Psoas muscle (tissue), 8 donors: ENCODE measurements at regions of chr3 and their contacts with region 1.

Region 1: DNA sequence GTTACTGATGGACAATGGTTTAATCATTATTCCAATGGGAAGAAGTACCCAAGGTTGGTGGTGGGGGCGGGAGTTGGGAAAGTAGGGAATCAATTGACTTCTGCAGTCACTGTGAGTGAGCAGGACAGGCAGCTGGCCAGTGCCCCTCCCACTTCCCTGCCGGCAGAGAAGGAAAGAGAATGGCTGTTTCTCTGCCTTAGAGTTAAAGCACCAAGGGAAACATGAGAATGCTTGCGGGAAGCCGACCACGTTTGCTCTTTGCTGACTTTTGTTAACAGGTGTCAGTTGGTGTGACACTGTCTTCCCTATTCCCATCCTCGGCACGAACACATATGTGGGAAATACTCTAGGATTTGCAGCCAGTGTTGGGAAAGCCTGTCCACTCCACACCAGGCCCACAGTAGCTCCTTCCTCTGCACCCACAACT is 33.5 kb upstream of the MFSD1 start:
- DNase-seq: peak; percentile 76 to 84
- ATAC-seq: peak; percentile 82 to 85 (median 85)
- H3K4me3 ChIP-seq: peak overlapping the region; percentile 13
- H3K27ac ChIP-seq: peak overlapping the region; percentile 75
- H3K4me1 ChIP-seq: peaks cover 23% of the 10 kb centered on the region
- H3K27me3 ChIP-seq: no peaks in the 10 kb centered on the region
- CTCF ChIP-seq: no peak

Region 2: GRCh38 chr3:157515398-157515797 is 1253.0 kb before region 1 on chr3:
- intact Hi-C with region 1: no loop called
- DNase-seq: no peak
- ATAC-seq: no peak
- H3K4me3 ChIP-seq: no peak overlapping the region
- H3K27ac ChIP-seq: no peak overlapping the region
- H3K4me1 ChIP-seq: no peaks in the 10 kb centered on the region
- H3K27me3 ChIP-seq: no peaks in the 10 kb centered on the region
- CTCF ChIP-seq: no peak

Region 3: DNA sequence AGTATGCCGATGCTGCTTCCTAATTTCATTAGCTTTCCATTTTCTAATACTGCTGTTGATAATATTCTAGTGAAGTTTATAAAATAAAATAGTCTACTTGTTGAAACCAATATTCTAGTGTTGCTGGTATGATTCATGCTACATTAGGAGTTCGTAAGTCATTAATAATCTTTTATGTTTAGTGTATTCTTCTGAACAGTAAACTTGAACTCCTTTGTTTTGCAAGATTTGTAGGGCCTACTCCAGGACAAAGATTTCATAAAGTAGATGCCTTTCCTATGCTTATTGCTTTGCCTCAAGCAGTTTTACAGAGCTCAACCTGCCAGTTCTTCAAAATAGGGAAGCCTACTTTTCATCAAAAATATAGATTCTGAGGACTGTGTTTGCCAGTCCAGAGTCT is 546.9 kb before region 1 on chr3:
- intact Hi-C with region 1: no loop called
- DNase-seq: no peak
- ATAC-seq: no peak
- H3K4me3 ChIP-seq: no peak overlapping the region
- H3K27ac ChIP-seq: no peak overlapping the region
- H3K4me1 ChIP-seq: no peaks in the 10 kb centered on the region
- H3K27me3 ChIP-seq: no peaks in the 10 kb centered on the region
- CTCF ChIP-seq: no peak

Region 4: DNA sequence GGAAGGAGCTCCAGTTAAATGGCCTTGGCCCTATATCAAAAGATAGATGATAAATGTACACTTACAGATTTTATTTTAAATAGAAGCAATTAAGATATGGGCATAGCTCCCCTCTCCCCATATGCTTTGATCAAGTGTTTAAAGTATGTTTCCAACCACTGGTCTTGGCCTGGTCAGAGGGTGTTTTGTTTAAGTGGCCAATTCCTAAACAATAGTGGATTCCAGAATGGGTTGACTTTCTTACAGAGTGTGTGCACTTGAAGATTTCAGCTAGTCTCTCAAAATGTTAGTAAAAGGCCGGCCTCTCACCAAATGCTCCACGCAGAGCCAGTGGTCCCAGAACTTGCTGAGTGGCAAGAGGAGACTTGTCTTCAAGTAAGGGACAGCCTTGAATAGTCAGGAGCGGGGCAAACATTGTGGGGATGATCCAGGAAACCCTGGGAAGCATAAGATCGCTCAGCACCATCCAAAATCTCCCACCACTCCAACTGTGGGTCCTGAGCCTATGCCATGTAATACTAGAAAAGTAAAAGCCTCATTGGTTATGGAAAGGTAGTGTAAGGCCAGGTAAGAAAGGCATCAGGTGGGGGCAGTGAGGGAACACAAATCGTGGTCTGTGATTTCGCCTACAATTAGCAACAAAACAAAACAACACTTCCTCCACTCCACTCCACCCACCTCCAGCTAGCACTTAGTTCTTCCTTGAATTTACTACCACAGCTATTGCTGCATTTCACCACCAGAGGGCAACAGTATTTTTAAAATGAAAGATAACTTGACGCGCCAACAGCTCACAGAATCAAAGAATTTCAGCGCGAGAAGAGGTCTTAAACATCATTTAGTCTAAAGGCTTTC is 40.9 kb before region 1 on chr3:
- intact Hi-C with region 1: loop called in 1 of 2 experiments (anchors 5 kb)
- DNase-seq: no peak
- ATAC-seq: peak; percentile 40 to 68 (median 54)
- H3K4me3 ChIP-seq: no peak overlapping the region
- H3K27ac ChIP-seq: peak overlapping the region; percentile 40
- H3K4me1 ChIP-seq: peaks cover 20% of the 10 kb centered on the region
- H3K27me3 ChIP-seq: no peaks in the 10 kb centered on the region
- CTCF ChIP-seq: peak; percentile 81